Ovary (tissue), 10 donors: ENCODE measurements at regions of chr5 and their contacts with region 1.

Region 1: GRCh38 chr5:26610562-26610961 is 427.8 kb downstream of the CDH9 start:
- DNase-seq: no peak
- H3K4me3 ChIP-seq: no peak overlapping the region
- H3K27ac ChIP-seq: no peak overlapping the region
- H3K4me1 ChIP-seq: no peaks in the 10 kb centered on the region
- H3K27me3 ChIP-seq: no peaks in the 10 kb centered on the region
- CTCF ChIP-seq: no peak
- EP300 ChIP-seq: no peak
- POLR2A ChIP-seq: no peak

Region 2: DNA sequence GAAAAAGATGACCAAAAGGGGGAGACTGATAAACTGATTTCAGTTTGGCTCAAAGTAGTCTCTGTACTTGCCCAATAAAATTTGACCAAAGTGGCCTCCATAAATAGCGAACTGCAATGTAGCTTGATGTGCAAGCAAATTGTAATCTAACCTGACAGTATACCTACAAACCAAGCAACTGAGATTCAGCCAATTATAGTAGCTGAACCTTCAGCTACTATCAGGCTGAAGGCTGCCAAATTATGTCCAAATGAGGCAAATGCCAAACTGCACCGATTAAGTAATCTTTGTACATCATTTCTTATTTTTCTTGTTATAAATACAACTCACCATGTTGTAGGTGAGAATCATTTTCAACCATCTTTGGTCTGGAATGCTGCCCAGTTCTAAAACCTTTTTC is 37.2 kb after region 1 on chr5:
- intact Hi-C with region 1: loop called in 1 of 4 experiments (anchors 1 kb)
- DNase-seq: no peak
- H3K4me3 ChIP-seq: no peak overlapping the region
- H3K27ac ChIP-seq: no peak overlapping the region
- H3K4me1 ChIP-seq: no peaks in the 10 kb centered on the region
- H3K27me3 ChIP-seq: no peaks in the 10 kb centered on the region
- CTCF ChIP-seq: no peak
- EP300 ChIP-seq: no peak
- POLR2A ChIP-seq: no peak

Region 3: GRCh38 chr5:26942481-26942880 is 331.9 kb after region 1 on chr5:
- intact Hi-C with region 1: no loop called
- DNase-seq: no peak
- H3K4me3 ChIP-seq: no peak overlapping the region
- H3K27ac ChIP-seq: no peak overlapping the region
- H3K4me1 ChIP-seq: no peaks in the 10 kb centered on the region
- H3K27me3 ChIP-seq: no peaks in the 10 kb centered on the region
- CTCF ChIP-seq: no peak
- EP300 ChIP-seq: no peak
- POLR2A ChIP-seq: no peak